Right cardiac atrium (tissue), 5 donors: ENCODE measurements at regions of chr14 and their contacts with region 1.

Region 1: DNA sequence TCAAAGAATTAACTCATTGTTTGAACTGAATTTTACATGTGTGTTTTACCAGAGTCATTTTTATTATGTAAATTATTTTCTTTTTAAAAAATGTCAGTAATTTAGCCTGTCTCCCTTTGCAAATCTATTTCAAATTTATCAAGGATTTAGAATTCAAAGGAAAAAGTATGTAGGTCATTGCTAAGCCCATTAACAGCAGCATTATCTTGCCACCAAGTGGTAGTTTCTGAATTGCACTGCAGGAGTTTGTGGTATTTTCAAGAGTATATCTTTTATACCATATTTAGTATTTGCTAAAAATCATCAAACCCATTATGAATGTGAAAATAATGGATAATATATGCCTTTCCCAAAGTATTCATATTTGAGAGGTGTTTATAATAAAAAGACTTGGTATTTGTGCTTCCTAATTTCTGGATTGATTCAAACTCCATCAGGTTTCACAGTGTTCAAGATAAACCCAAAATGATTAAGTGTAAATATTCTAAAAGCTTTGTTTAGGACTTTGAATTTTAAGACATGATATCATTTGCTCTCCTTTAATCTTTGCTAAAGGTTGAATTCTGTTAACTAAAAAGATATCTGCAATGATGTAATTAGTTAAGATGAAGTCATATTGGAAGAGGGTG is 711.4 kb downstream of the FSCB start:
- DNase-seq: no peak
- ATAC-seq: no peak
- H3K4me3 ChIP-seq: no peak overlapping the region
- H3K27ac ChIP-seq: no peak overlapping the region
- H3K4me1 ChIP-seq: no peaks in the 10 kb centered on the region
- H3K27me3 ChIP-seq: no peaks in the 10 kb centered on the region

Region 2: GRCh38 chr14:43697003-43697402 is 98.7 kb before region 1 on chr14:
- intact Hi-C with region 1: no loop called
- DNase-seq: no peak
- ATAC-seq: no peak
- H3K4me3 ChIP-seq: no peak overlapping the region
- H3K27ac ChIP-seq: no peak overlapping the region
- H3K4me1 ChIP-seq: no peaks in the 10 kb centered on the region
- H3K27me3 ChIP-seq: no peaks in the 10 kb centered on the region

Region 3: DNA sequence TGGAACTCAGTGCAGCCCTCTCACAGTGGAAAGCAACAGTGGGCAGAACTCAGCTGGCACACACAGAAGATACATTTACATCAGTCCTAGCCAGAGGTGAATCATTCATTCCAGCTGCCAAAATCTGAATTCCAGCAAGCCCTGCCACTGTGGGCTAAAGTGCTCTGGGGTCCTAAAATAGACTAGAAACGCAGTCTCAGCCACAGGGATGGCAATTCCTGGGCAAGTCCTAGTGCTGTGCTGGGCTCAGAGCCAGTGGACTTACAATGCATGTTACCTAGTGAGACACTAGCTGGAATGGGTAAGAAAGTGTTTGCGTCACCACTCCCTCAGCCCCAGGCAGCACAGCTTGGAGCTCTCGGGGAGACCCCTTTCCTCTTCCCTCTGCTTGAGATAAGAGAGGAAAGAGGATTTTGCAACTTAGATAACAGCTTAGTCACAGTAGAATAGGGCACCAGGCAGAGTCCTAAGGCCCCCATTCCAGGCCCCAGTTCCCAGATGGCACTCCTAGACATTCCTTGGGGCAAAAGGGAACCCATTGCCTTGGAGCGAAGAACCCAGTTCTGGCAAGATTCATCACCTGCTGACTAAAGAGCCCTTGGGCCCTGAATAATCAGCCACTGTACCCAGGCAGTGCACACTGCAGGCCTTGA is 118.5 kb after region 1 on chr14:
- intact Hi-C with region 1: loop called in 1 of 4 experiments (anchors 5 kb)
- DNase-seq: peak; percentile 39 to 50 (median 46)
- ATAC-seq: peak; percentile 41 to 94
- H3K4me3 ChIP-seq: no peak overlapping the region
- H3K27ac ChIP-seq: no peak overlapping the region
- H3K4me1 ChIP-seq: no peaks in the 10 kb centered on the region
- H3K27me3 ChIP-seq: no peaks in the 10 kb centered on the region